ENCODE measurements at regions of chr20 and their contacts with region 1.

Region 1: DNA sequence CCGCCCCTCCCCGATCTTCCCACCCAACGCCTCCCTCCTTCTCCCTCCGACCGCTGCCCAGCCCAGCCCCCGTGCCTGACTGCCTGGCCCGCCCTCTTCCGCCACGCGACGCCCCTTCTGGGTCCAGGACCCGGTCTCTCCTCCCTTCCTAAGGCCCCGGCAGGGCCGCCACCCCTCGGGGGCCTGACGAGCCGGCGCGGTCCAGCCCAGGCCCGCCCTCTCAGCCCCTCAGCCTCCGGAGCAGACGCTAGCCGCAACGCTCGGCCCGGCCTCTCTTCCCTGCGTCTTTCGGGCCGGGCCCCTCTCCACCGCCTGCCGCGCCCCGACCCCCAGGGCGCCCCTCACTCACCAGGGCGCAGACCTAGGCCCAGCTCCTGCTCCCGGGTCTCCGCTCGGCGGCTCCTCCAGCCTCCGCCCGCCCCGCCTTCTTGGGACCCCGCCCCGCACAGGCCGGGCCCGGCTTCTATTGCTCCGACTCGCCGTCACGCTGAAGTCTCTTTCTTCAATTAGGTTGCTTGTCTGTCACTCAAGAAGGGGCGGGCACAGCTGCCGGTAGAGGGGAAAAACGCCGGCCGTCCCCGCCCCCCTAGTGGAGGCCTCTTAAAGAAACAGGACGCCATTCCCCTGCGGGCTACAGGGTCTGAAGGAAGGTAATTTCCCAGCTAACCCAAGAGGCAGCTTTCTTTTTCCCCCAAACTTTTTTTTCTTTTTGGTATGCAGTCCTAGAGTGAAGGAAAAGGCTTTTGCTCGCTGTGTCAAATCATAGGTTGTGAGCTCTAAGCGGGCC is at the start of gene ELMO2:
- DNase-seq: peak; percentile 97 to 98
- ATAC-seq: peak; percentile 93 to 94
- H3K4me3 ChIP-seq: peak within 1 kb of the TSS; percentile 83 to 98 (median 90)
- H3K27ac ChIP-seq: peak within 1 kb of the TSS; percentile 94 to 98 (median 96)
- H3K4me1 ChIP-seq: peaks cover 52 to 56% of the 10 kb centered on the region in 2 donors
- H3K27me3 ChIP-seq: no peaks in the 10 kb centered on the region
- CTCF ChIP-seq: peak in 4 of 5 experiments; percentile 34 to 50 (median 42)
- POLR2A ChIP-seq: peak; percentile 86 to 88
- total RNA-seq, gene ELMO2: 47.6 to 67.5 (median 53.6) TPM

Region 2: DNA sequence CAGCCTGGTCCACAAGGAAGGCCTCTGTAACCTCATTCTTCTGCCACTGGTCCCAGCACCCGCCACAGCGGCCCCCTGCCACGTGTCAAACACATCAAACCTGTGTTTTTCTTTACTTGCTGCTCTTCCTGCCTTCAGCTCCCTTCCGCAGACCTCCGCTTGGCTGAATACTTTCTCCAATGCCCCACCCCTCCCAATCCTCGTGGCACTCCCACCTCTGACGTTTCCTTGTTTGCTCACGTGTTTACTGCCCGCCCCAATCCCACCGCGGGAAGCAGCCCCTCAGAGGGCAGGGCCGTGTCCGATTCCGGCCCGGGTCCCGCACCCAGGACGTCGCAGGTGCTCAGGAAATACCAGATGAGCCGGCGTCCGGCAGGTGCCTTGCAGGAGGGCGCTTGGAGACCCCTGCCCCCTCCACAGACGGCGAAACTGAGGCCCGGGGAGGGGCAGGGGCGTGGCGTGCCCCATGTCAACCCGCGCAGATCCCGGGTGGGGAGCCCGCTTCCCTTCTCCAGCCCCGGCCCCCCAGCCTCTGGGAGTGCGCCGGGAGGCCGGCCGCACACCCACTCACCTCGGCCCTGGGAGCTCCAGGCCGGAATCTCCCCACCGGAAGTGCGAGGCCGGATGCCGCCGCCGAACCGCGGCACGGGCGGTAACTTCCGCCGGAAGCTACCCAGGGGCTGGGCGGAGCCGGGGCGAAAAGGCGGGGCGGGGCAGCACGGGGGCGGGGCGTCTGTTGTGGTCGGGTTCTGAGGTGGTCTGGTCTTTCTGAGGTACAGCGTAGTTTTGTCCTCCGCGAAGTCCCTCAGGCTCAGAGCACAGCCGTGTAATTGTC is 42.4 kb before region 1 on chr20:
- in situ Hi-C with region 1: no loop called
- intact Hi-C with region 1: loop called (anchors 1 kb)
- DNase-seq: peak; percentile 79 to 80
- ATAC-seq: peak; percentile 89 to 92
- H3K4me3 ChIP-seq: peak overlapping the region; percentile 87 to 100 (median 93)
- H3K27ac ChIP-seq: peak overlapping the region; percentile 94 to 100 (median 98)
- H3K4me1 ChIP-seq: peaks cover 50 to 51% of the 10 kb centered on the region in 2 donors
- H3K27me3 ChIP-seq: no peaks in the 10 kb centered on the region
- CTCF ChIP-seq: no peak
- POLR2A ChIP-seq: peak; percentile 90

Region 3: GRCh38 chr20:46375771-46376170 is 30.6 kb before region 1 on chr20:
- in situ Hi-C with region 1: no loop called
- intact Hi-C with region 1: no loop called
- DNase-seq: no peak
- ATAC-seq: no peak
- H3K4me3 ChIP-seq: no peak overlapping the region
- H3K27ac ChIP-seq: no peak overlapping the region
- H3K4me1 ChIP-seq: no peaks in the 10 kb centered on the region
- H3K27me3 ChIP-seq: no peaks in the 10 kb centered on the region
- CTCF ChIP-seq: no peak
- POLR2A ChIP-seq: no peak

Measured in gastrocnemius medialis (tissue), 4 donors.